ENCODE measurements at regions of chr14 and their contacts with region 1.

Region 1: GRCh38 chr14:49633640-49634546 is 1.2 kb downstream of the DNAAF2 start:
- DNase-seq: peak; percentile 97
- ATAC-seq: peak; percentile 90
- H3K4me3 Mint-ChIP-seq: peak overlapping the region; percentile 92
- H3K27ac Mint-ChIP-seq: peak overlapping the region; percentile 96
- H3K4me1 Mint-ChIP-seq: peaks cover 36% of the 10 kb centered on the region
- H3K27me3 Mint-ChIP-seq: no peaks in the 10 kb centered on the region
- CTCF ChIP-seq: peak; percentile 81

Region 2: DNA sequence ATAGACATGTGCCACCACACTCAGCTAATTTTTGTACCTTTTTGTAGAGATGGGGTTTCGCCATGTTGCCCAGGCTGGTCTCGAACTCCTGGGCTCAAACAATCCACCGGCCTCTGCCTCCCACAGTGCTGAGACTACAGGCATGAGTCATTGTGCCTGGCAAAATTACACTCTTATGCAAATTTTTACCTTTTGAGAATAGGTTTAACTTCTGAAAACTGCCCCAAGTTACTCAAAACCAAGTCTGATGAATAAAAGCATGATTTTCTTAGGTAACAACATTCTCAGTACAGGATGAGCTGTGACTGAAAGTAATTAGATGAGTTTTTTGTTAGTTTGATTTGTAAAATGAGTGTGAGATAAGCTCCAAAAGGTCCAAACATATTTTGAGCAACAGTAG is 213.7 kb before region 1 on chr14:
- CTCF ChIA-PET with region 1: no interaction called
- POLR2A ChIA-PET with region 1: no interaction called
- intact Hi-C with region 1: no loop called
- DNase-seq: peak; percentile 5
- ATAC-seq: peak; percentile 39
- H3K4me3 Mint-ChIP-seq: no peak overlapping the region
- H3K27ac Mint-ChIP-seq: no peak overlapping the region
- H3K4me1 Mint-ChIP-seq: peaks cover 3% of the 10 kb centered on the region
- H3K27me3 Mint-ChIP-seq: peaks cover 19% of the 10 kb centered on the region
- CTCF ChIP-seq: no peak

Region 3: DNA sequence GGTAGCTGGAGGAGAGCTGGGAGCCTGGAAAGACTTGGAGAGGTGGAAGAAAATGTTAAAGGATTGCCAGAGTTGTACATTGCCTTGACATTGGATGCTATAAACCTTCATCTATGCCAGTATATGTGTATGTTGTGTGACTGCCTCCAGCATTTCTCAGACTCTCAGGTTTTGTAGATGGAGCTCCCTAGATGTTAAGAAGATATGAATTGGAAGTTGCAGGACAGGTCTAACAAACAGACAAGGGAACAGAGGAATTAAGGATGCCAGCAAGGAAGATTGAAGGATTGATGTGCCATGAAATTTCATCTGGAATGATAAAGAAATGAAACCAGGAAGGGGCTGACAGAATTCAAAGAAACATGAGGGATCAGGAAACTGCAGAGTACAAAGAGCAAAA is 105.8 kb before region 1 on chr14:
- CTCF ChIA-PET with region 1: no interaction called
- POLR2A ChIA-PET with region 1: no interaction called
- intact Hi-C with region 1: no loop called
- DNase-seq: no peak
- ATAC-seq: no peak
- H3K4me3 Mint-ChIP-seq: no peak overlapping the region
- H3K27ac Mint-ChIP-seq: no peak overlapping the region
- H3K4me1 Mint-ChIP-seq: no peaks in the 10 kb centered on the region
- H3K27me3 Mint-ChIP-seq: no peaks in the 10 kb centered on the region
- CTCF ChIP-seq: no peak

Region 4: GRCh38 chr14:49585803-49586672 is 47.9 kb before region 1 on chr14 and contains the start of gene RPS29:
- CTCF ChIA-PET with region 1: interaction called, 4 read pairs
- POLR2A ChIA-PET with region 1: interaction called, 24 read pairs
- intact Hi-C with region 1: no loop called
- DNase-seq: peak; percentile 99
- ATAC-seq: peak; percentile 82
- H3K4me3 Mint-ChIP-seq: peak within 1 kb of the TSS; percentile 91
- H3K27ac Mint-ChIP-seq: peak within 1 kb of the TSS; percentile 96
- H3K4me1 Mint-ChIP-seq: peaks cover 41% of the 10 kb centered on the region
- H3K27me3 Mint-ChIP-seq: peaks cover 2% of the 10 kb centered on the region
- CTCF ChIP-seq: no peak
- total RNA-seq, gene RPS29: 2,041 to 2,284 TPM

Region 5: DNA sequence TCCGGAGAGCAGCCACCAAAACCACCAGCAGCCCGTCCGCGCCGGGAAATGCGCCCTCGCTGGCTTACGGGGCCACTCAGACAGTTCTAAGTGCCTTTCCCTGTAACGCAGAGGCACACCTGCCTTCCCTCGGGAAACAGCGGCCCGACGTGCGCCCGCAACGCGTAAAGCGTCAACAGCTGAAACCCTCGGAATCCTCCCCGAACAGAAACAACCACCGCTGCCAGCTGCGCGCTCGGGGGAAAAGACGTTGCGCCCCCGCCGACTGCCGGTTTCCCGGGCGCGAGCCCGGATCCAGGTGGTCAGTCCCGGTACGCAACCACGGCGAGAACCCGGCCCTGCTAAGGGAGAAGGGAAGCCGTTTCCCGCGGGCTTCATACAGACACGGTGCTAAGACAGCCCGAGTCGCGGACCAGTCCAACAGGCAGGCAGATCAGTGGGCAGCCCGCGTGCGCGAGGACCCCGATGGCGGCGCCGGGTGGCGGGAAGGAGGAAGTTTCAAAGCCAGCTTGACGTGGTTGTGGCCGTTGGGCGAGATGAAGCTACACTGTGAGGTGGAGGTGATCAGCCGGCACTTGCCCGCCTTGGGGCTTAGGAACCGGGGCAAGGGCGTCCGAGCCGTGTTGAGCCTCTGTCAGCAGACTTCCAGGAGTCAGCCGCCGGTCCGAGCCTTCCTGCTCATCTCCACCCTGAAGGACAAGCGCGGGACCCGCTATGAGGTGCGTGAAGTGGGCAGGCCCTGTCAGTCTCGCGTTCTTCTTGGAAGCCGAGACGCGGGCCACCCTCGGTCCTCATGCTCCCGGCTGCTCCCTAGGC is 35.2 kb before region 1 on chr14 and contains the start of gene LRR1:
- CTCF ChIA-PET with region 1: interaction called, 4 read pairs
- POLR2A ChIA-PET with region 1: interaction called, 10 read pairs
- intact Hi-C with region 1: no loop called
- DNase-seq: peak; percentile 89
- ATAC-seq: peak; percentile 86
- H3K4me3 Mint-ChIP-seq: peak within 1 kb of the TSS; percentile 98
- H3K27ac Mint-ChIP-seq: peak within 1 kb of the TSS; percentile 98
- H3K4me1 Mint-ChIP-seq: peaks cover 18% of the 10 kb centered on the region
- H3K27me3 Mint-ChIP-seq: no peaks in the 10 kb centered on the region
- CTCF ChIP-seq: no peak
- total RNA-seq, gene LRR1: 44.3 to 46.4 TPM

Region 6: GRCh38 chr14:49620182-49621113 is 13.4 kb before region 1 on chr14 and contains the starts of genes MGAT2 and RPL36AL:
- CTCF ChIA-PET with region 1: interaction called, 30 read pairs
- POLR2A ChIA-PET with region 1: interaction called, 44 read pairs
- intact Hi-C with region 1: loop called (anchors 2 kb)
- DNase-seq: peak; percentile 95
- ATAC-seq: peak; percentile 91
- H3K4me3 Mint-ChIP-seq: peak within 1 kb of the TSS; percentile 90
- H3K27ac Mint-ChIP-seq: peak within 1 kb of the TSS; percentile 98
- H3K4me1 Mint-ChIP-seq: peaks cover 44% of the 10 kb centered on the region
- H3K27me3 Mint-ChIP-seq: no peaks in the 10 kb centered on the region
- CTCF ChIP-seq: no peak
- total RNA-seq, gene MGAT2: 30.2 to 32.7 TPM
- total RNA-seq, gene RPL36AL: 214 to 231 TPM

Region 7: GRCh38 chr14:49767562-49768300 is 133.8 kb after region 1 on chr14 and contains the start of gene KLHDC2:
- CTCF ChIA-PET with region 1: interaction called, 14 read pairs
- POLR2A ChIA-PET with region 1: interaction called, 36 read pairs
- intact Hi-C with region 1: loop called (anchors 5 kb)
- DNase-seq: peak; percentile 90
- ATAC-seq: peak; percentile 84
- H3K4me3 Mint-ChIP-seq: peak within 1 kb of the TSS; percentile 93
- H3K27ac Mint-ChIP-seq: peak within 1 kb of the TSS; percentile 98
- H3K4me1 Mint-ChIP-seq: peaks cover 31% of the 10 kb centered on the region
- H3K27me3 Mint-ChIP-seq: no peaks in the 10 kb centered on the region
- CTCF ChIP-seq: peak; percentile 25
- total RNA-seq, gene KLHDC2: 21.1 to 23.4 TPM

Region 8: GRCh38 chr14:49828640-49829039 is 194.7 kb after region 1 on chr14:
- CTCF ChIA-PET with region 1: interaction called, 6 read pairs
- POLR2A ChIA-PET with region 1: interaction called, 4 read pairs
- intact Hi-C with region 1: loop called (anchors 5 kb)
- DNase-seq: no peak
- ATAC-seq: no peak
- H3K4me3 Mint-ChIP-seq: no peak overlapping the region
- H3K27ac Mint-ChIP-seq: no peak overlapping the region
- H3K4me1 Mint-ChIP-seq: peaks cover 2% of the 10 kb centered on the region
- H3K27me3 Mint-ChIP-seq: no peaks in the 10 kb centered on the region
- CTCF ChIP-seq: no peak

Region 9: GRCh38 chr14:49852301-49853157 is 218.6 kb after region 1 on chr14 and contains the start of gene NEMF:
- CTCF ChIA-PET with region 1: interaction called, 16 read pairs
- POLR2A ChIA-PET with region 1: interaction called, 13 read pairs
- intact Hi-C with region 1: no loop called
- DNase-seq: peak; percentile 91
- ATAC-seq: peak; percentile 87
- H3K4me3 Mint-ChIP-seq: peak within 1 kb of the TSS; percentile 97
- H3K27ac Mint-ChIP-seq: peak within 1 kb of the TSS; percentile 97
- H3K4me1 Mint-ChIP-seq: peaks cover 32% of the 10 kb centered on the region
- H3K27me3 Mint-ChIP-seq: no peaks in the 10 kb centered on the region
- CTCF ChIP-seq: peak; percentile 92
- total RNA-seq, gene NEMF: 62.3 to 63.8 TPM

Region 10: DNA sequence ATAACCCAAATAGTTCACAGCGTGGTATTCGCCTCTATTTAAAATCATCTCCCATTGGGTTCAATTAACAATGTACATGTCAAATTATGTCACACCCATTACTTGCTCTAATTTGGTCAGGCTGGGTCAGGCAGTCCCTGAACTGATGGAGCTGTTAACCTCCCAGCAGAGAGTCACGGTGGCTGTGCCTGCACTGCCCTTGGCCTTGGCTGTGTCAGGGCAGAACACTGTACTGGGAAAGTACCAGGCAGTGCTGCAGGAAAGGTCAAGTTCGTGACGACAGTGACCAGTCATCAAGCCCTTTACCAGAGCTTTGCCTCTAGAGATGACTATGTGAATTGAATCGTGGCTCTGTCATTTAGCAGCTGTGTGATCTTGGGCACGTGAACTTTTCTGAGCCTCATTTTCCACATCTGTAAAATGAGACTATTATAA is 359.0 kb after region 1 on chr14:
- CTCF ChIA-PET with region 1: no interaction called
- POLR2A ChIA-PET with region 1: no interaction called
- intact Hi-C with region 1: no loop called
- DNase-seq: peak; percentile 80
- ATAC-seq: peak; percentile 96
- H3K4me3 Mint-ChIP-seq: peak overlapping the region; percentile 56
- H3K27ac Mint-ChIP-seq: peak overlapping the region; percentile 81
- H3K4me1 Mint-ChIP-seq: peaks cover 26% of the 10 kb centered on the region
- H3K27me3 Mint-ChIP-seq: no peaks in the 10 kb centered on the region
- CTCF ChIP-seq: no peak